Right ventricle myocardium inferior (tissue), 1 donor: ENCODE measurements at regions of chr1 and their contacts with region 1.

Region 1: GRCh38 chr1:59879574-59879973 is 47.0 kb downstream of the CYP2J2 start:
- DNase-seq: no peak
- ATAC-seq: no peak

Region 2: DNA sequence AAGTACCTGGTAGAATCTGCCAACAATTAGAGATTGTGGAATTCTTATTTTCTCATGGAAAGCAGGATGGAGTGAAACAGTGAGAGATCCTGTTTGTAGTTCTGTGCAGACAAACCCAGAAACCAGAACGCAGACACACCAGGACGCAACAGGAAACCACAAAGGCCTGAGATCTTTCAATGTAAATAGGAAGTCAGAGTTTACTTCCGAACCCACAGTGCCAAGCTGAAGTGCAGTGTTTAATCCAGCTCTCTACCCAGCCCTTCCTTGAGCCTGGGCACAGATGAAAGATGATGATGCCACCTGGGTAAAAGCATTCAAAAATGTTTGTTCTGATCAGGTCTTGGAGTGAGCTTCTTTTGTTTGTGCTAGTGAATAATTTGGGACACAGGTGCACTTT is 309.1 kb before region 1 on chr1:
- intact Hi-C with region 1: no loop called
- DNase-seq: no peak
- ATAC-seq: peak; percentile 50

Region 3: GRCh38 chr1:59947047-59947938 is 67.7 kb after region 1 on chr1:
- intact Hi-C with region 1: loop called (anchors 1 kb)
- DNase-seq: no peak
- ATAC-seq: peak; percentile 85